ENCODE measurements at regions of chr2 and their contacts with region 1.

Region 1: DNA sequence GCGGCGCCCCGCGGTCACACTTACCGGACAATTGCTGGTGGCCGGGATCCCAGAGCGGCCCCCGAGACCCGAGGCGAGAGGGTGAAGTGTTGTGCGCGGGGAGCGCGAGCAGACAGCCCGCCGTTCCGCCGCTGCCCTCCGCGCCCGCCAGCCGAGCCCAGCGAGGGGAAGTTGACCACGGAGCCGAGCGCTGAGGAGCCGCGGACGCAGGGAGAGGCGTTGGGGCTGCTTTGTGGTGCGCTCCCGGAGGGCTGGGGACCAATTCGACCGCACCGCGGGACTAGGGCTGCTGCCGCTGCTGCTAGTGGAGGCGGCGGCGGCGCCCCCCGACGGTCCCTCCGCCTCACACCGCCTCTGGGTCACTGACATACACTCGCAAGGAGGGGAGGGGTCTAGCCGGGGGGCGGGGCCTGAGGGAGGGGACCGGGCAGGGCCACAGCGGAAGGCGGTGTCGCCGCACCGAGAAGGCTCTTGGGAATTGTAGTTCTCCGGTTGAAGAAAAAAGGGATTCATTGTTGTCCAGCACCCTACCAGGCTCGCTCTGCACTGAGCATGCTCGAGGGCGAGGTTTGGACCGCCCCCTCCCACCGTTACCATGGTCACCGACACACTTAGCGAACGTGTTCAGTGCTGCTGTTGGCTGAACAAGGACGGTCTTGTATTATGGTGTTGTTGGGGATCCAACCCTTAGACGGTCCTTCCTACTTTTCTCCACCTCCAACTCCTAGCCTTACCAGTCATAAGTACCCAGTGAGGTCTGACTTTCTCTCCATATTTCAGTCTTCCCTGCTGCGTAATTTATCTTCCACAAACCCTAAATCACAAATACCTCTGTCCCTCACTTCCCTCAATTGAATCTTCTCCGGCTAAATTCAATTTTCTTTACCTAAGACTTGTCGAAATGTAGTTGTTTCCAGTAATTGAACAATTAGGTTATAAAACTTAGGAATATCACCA is at the start of gene PELI1:
- DNase-seq: peak; percentile 86 to 94 (median 90)
- H3K4me3 ChIP-seq: peak within 1 kb of the TSS; percentile 61 to 81
- H3K4me3 Mint-ChIP-seq: peak within 1 kb of the TSS; percentile 92 to 99 (median 98)
- H3K27ac ChIP-seq: peak within 1 kb of the TSS; percentile 88
- H3K27ac Mint-ChIP-seq: peak within 1 kb of the TSS; percentile 96 to 99 (median 98)
- H3K4me1 ChIP-seq: peaks cover 53% of the 10 kb centered on the region
- H3K4me1 Mint-ChIP-seq: peaks cover 22 to 39% (median 25%) of the 10 kb centered on the region in 4 donors
- H3K27me3 ChIP-seq: no peaks in the 10 kb centered on the region
- H3K27me3 Mint-ChIP-seq: no peaks in the 10 kb centered on the region
- total RNA-seq, gene PELI1: 36.7 to 40.5 TPM

Region 2: GRCh38 chr2:63594660-63595059 is 549.7 kb before region 1 on chr2:
- CTCF ChIA-PET with region 1: no interaction called
- POLR2A ChIA-PET with region 1: no interaction called
- intact Hi-C with region 1: no loop called
- DNase-seq: no peak
- H3K4me3 ChIP-seq: no peak overlapping the region
- H3K4me3 Mint-ChIP-seq: no peak overlapping the region
- H3K27ac ChIP-seq: no peak overlapping the region
- H3K27ac Mint-ChIP-seq: peak overlapping the region in 1 of 7 donors; percentile 29
- H3K4me1 ChIP-seq: peaks cover 18% of the 10 kb centered on the region
- H3K4me1 Mint-ChIP-seq: peaks cover 18 to 41% (median 30%) of the 10 kb centered on the region in 4 donors
- H3K27me3 ChIP-seq: no peaks in the 10 kb centered on the region
- H3K27me3 Mint-ChIP-seq: no peaks in the 10 kb centered on the region

Region 3: DNA sequence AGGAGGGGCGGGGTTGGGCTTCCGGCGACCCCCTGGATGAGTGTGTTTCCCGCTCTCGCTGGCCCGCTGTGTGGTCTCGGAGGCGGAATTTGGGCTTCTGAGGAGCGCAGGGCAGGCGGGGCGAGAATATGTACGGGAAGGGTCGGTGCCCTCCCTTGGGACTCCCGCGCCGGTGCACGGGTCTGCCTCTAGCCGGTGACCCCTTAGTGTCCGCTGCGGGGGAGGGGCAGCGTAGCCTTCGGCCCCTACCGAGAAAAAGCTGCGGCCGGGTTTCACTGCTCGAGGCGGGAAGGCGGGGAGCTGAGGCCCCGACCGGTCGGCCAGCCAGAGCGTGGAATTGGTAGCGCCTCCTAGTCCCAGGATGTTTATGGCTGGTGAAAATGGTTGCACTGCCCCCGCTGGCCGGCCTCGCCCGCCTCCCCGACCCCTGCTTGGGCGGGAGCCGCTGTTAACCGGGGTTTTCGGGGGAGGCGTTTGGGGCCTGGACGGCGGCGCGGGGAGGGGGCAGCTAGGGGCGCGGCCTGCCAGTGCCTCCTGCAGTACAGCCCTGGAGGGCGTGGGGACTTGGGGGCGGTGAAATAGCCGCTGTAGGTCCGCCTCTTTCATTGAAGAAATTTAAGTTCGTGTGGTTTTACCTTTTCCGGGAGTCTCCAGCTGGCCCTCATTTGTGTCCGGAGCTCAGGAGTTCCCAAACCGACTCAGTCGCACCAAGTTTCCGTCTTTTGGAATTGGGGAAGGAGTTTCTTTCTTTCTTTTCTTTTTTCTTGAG is 302.9 kb before region 1 on chr2 and contains the start of gene UGP2:
- CTCF ChIA-PET with region 1: no interaction called
- POLR2A ChIA-PET with region 1: interaction called, 4 read pairs
- intact Hi-C with region 1: loop called (anchors 2 kb)
- DNase-seq: peak; percentile 82 to 94 (median 83)
- H3K4me3 ChIP-seq: peak within 1 kb of the TSS; percentile 63 to 85
- H3K4me3 Mint-ChIP-seq: peak within 1 kb of the TSS; percentile 96 to 100 (median 98)
- H3K27ac ChIP-seq: peak within 1 kb of the TSS; percentile 71
- H3K27ac Mint-ChIP-seq: peak within 1 kb of the TSS; percentile 95 to 100 (median 97)
- H3K4me1 ChIP-seq: peaks cover 44% of the 10 kb centered on the region
- H3K4me1 Mint-ChIP-seq: peaks cover 38 to 63% (median 51%) of the 10 kb centered on the region in 4 donors
- H3K27me3 ChIP-seq: no peaks in the 10 kb centered on the region
- H3K27me3 Mint-ChIP-seq: no peaks in the 10 kb centered on the region
- total RNA-seq, gene UGP2: 77.6 to 92.7 TPM

Region 4: DNA sequence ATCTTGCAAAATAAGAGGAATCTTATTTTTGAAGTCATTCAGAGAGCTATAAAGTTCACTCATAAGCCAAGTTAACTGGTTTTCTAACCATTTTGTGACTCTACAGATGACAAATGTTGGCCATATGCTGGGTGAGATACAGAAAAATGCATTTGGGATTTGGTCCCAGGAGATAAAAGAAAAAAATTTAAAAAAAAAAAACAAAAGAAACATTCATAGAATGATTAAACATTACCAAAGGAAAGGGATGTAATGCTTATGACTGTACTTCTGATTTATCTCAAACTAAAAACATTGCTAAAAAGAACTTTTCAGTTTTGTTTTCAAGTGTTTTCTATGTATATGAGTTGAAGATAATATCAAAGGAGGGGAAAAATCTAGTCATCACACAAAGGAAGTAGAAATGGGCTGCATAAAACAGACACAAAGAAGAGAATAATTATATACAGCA is 43.2 kb before region 1 on chr2:
- CTCF ChIA-PET with region 1: interaction called, 4 read pairs
- POLR2A ChIA-PET with region 1: interaction called, 8 read pairs
- intact Hi-C with region 1: loop called (anchors 2 kb)
- DNase-seq: peak in 3 of 5 donors; percentile 19 to 25 (median 21)
- H3K4me3 ChIP-seq: no peak overlapping the region
- H3K4me3 Mint-ChIP-seq: peak overlapping the region in 7 of 8 donors; percentile 8 to 79 (median 59)
- H3K27ac ChIP-seq: no peak overlapping the region
- H3K27ac Mint-ChIP-seq: peak overlapping the region; percentile 24 to 86 (median 55)
- H3K4me1 ChIP-seq: peaks cover 44% of the 10 kb centered on the region
- H3K4me1 Mint-ChIP-seq: peaks cover 22 to 52% (median 30%) of the 10 kb centered on the region in 4 donors
- H3K27me3 ChIP-seq: no peaks in the 10 kb centered on the region
- H3K27me3 Mint-ChIP-seq: no peaks in the 10 kb centered on the region

Region 5: GRCh38 chr2:64203858-64204632 is 59.7 kb after region 1 on chr2:
- CTCF ChIA-PET with region 1: no interaction called
- POLR2A ChIA-PET with region 1: interaction called, 9 read pairs
- intact Hi-C with region 1: loop called (anchors 2 kb)
- DNase-seq: peak in 4 of 5 donors; percentile 43 to 82 (median 54)
- H3K4me3 ChIP-seq: peak overlapping the region; percentile 5 to 35
- H3K4me3 Mint-ChIP-seq: peak overlapping the region; percentile 62 to 93 (median 80)
- H3K27ac ChIP-seq: peak overlapping the region; percentile 87
- H3K27ac Mint-ChIP-seq: peak overlapping the region; percentile 91 to 99 (median 96)
- H3K4me1 ChIP-seq: peaks cover 81% of the 10 kb centered on the region
- H3K4me1 Mint-ChIP-seq: peaks cover 54 to 85% (median 75%) of the 10 kb centered on the region in 4 donors
- H3K27me3 ChIP-seq: no peaks in the 10 kb centered on the region
- H3K27me3 Mint-ChIP-seq: no peaks in the 10 kb centered on the region

Region 6: DNA sequence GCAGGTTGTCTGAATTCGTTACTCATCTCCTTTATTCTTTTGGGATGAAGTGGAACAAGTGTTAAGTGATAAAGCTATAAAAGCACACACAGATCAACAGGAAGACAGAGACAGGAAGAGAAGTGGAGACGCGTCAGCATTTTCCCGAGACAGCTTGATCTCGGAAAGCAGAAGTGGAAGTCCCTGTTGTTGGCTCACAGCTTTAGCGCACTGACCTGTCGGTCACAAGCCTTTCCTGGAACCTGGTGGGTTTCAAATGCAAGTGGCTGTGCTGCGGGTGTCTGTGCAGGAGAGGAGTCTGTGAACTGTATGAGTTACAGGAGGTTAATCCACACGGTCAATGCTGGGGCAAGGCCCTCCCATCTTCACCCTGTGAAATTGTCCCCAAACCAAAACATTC is 116.5 kb after region 1 on chr2:
- CTCF ChIA-PET with region 1: no interaction called
- POLR2A ChIA-PET with region 1: interaction called, 3 read pairs
- intact Hi-C with region 1: loop called (anchors 5 kb)
- DNase-seq: peak in 4 of 5 donors; percentile 12 to 24 (median 16)
- H3K4me3 ChIP-seq: peak overlapping the region in 1 of 2 donors; percentile 16
- H3K4me3 Mint-ChIP-seq: peak overlapping the region; percentile 67 to 91 (median 77)
- H3K27ac ChIP-seq: peak overlapping the region; percentile 22
- H3K27ac Mint-ChIP-seq: peak overlapping the region; percentile 47 to 95 (median 91)
- H3K4me1 ChIP-seq: peaks cover 11% of the 10 kb centered on the region
- H3K4me1 Mint-ChIP-seq: peaks cover 6 to 8% (median 7%) of the 10 kb centered on the region in 4 donors
- H3K27me3 ChIP-seq: no peaks in the 10 kb centered on the region
- H3K27me3 Mint-ChIP-seq: no peaks in the 10 kb centered on the region

Region 7: GRCh38 chr2:65227425-65228262 is 1083.3 kb after region 1 on chr2 and contains the start of gene ACTR2:
- CTCF ChIA-PET with region 1: no interaction called
- POLR2A ChIA-PET with region 1: interaction called, 3 read pairs
- intact Hi-C with region 1: loop called (anchors 10 kb)
- DNase-seq: peak; percentile 93 to 97 (median 95)
- H3K4me3 ChIP-seq: peak within 1 kb of the TSS; percentile 96 to 97
- H3K4me3 Mint-ChIP-seq: peak within 1 kb of the TSS; percentile 97 to 100 (median 99)
- H3K27ac ChIP-seq: peak within 1 kb of the TSS; percentile 100
- H3K27ac Mint-ChIP-seq: peak within 1 kb of the TSS; percentile 99 to 100 (median 99)
- H3K4me1 ChIP-seq: peaks cover 50% of the 10 kb centered on the region
- H3K4me1 Mint-ChIP-seq: peaks cover 23 to 58% (median 35%) of the 10 kb centered on the region in 4 donors
- H3K27me3 ChIP-seq: no peaks in the 10 kb centered on the region
- H3K27me3 Mint-ChIP-seq: no peaks in the 10 kb centered on the region
- total RNA-seq, gene ACTR2: 298 to 312 TPM